CD8-positive, alpha-beta T cell (primary cell): ENCODE measurements at regions of chr15 and their contacts with region 1.

Region 1: DNA sequence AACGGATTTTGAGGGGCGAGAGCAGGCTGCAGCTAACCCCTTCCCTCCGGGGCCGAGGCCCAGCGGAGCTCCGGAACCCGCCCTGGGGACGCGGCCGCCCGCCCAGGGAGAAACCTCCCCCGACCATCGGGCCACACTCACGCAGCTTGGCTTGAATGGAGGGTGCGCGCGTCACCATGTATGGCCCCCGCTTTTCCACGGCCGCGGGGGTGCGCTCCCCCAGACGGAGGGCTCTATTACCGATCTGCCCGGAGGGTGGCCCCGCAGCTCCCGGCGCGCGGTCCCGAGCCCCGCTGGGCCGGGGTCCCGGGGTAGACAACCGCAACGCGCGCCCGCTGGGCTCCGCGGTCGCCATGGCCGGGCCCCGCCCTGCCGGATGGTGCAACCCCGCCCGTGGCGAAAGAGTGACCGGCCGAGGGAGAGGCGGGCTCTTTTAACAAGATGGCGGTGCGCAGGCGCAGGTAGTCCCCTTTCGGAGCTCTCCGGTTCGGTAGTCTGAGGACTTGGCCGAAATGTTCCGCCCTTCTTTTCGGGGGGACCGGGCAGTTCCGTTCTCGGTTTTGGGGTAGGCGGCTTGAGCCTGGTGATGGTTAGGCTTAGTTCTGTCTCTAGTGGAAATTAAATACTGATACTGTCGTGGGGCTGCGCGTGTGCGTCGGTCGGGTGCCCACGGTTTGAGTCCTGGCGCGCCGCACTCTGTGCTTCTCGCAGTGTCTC is at the start of gene FAM219B:
- DNase-seq: peak; percentile 30 to 84 (median 71)
- ATAC-seq: peak; percentile 79
- H3K4me3 ChIP-seq: peak within 1 kb of the TSS; percentile 85 to 89
- H3K4me3 Mint-ChIP-seq: peak within 1 kb of the TSS; percentile 94
- H3K27ac ChIP-seq: peak within 1 kb of the TSS; percentile 78 to 82
- H3K27ac Mint-ChIP-seq: peak within 1 kb of the TSS; percentile 95
- H3K4me1 ChIP-seq: peaks cover 28% of the 10 kb centered on the region
- H3K4me1 Mint-ChIP-seq: peaks cover 41% of the 10 kb centered on the region
- H3K27me3 ChIP-seq: no peaks in the 10 kb centered on the region
- H3K27me3 Mint-ChIP-seq: no peaks in the 10 kb centered on the region
- CTCF ChIP-seq: no peak
- total RNA-seq, gene FAM219B: 18.6 to 22.1 TPM

Region 2: DNA sequence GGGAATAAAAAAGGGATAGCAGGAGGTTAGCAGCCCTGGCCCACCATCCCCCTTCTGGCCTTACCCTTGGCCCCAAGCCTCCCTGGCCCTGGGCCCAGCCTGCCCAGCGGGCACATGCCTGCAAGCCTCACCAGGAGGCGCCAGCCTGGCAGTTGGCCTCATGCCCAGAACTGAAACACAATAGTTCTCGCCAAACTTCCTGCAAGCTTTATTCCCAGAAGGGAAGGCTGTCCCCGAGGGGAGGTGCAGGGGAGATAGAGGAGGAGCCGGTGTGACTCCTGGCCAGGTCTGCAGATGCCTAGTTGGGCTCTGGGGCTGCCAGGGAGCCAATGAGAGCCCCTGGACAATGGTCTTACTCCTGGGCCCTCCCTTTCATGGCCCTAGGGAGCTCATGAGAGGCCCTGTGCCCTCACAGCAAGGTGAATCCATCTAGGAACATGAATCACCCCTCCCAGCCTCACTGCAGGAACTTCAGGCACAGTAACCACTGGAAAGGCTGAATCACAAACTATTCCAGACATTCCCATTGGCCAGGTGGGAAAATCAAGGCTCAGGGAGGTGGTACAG is 666.5 kb before region 1 on chr15:
- CTCF ChIA-PET with region 1: no interaction called
- POLR2A ChIA-PET with region 1: no interaction called
- intact Hi-C with region 1: no loop called
- DNase-seq: no peak
- ATAC-seq: no peak
- H3K4me3 ChIP-seq: no peak overlapping the region
- H3K4me3 Mint-ChIP-seq: no peak overlapping the region
- H3K27ac ChIP-seq: no peak overlapping the region
- H3K27ac Mint-ChIP-seq: no peak overlapping the region
- H3K4me1 ChIP-seq: peaks cover 5% of the 10 kb centered on the region
- H3K4me1 Mint-ChIP-seq: peaks cover 7% of the 10 kb centered on the region
- H3K27me3 ChIP-seq: no peaks in the 10 kb centered on the region
- H3K27me3 Mint-ChIP-seq: peaks cover 31% of the 10 kb centered on the region
- CTCF ChIP-seq: no peak

Region 3: GRCh38 chr15:74799856-74800547 is 106.6 kb before region 1 on chr15:
- CTCF ChIA-PET with region 1: interaction called, 18 read pairs
- POLR2A ChIA-PET with region 1: no interaction called
- intact Hi-C with region 1: no loop called
- DNase-seq: peak; percentile 74 to 94 (median 87)
- ATAC-seq: peak; percentile 95
- H3K4me3 ChIP-seq: no peak overlapping the region
- H3K4me3 Mint-ChIP-seq: peak overlapping the region; percentile 42
- H3K27ac ChIP-seq: peak overlapping the region; percentile 36 to 94
- H3K27ac Mint-ChIP-seq: peak overlapping the region; percentile 92
- H3K4me1 ChIP-seq: peaks cover 56% of the 10 kb centered on the region
- H3K4me1 Mint-ChIP-seq: peaks cover 56% of the 10 kb centered on the region
- H3K27me3 ChIP-seq: no peaks in the 10 kb centered on the region
- H3K27me3 Mint-ChIP-seq: no peaks in the 10 kb centered on the region
- CTCF ChIP-seq: peak; percentile 92

Region 4: DNA sequence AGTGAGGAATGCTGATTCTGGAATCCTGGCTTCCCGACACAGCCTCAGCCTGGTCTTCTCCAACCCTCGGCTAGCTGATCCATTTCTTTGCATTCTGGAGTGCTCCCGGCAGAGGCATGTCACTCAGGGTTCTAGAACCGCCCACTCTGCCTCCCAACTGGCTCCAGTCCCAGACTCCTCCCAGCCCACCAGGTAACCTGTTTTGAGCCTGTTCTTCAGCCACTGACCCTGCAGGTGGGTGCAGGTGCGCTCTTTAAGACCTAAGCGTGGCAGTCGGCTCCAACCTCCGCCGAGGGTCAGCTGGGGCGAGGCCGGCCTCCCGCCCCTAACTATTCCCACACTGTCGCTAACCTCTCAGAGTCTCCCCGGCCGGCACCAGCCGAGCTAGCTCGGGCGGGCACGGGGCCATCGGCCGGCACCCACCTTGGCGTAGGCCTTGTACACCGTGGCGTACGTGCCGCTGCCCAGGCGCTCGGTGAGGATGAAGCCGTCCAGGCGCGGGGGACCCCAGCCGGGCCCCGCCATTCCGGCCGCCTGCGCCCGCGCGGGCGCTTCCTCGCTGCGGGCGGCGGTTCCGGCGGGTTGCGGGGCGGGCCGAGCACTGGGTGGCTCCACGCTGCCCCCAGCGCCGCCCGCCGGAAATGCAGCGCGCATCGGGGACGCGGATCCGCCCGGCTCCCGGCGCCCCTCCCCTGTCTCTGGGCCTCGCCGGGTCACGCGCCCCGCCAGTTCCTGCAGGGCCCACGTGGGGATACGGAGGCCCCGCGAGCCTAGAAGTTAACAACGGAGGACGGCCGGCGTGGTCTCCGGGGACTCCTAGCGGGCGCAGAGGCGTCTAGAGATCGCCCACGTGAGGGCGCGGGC is 63.8 kb before region 1 on chr15 and contains the start of gene ULK3:
- CTCF ChIA-PET with region 1: interaction called, 62 read pairs
- POLR2A ChIA-PET with region 1: interaction called, 12 read pairs
- intact Hi-C with region 1: loop called (anchors 1 kb)
- DNase-seq: peak; percentile 88 to 96 (median 92)
- ATAC-seq: peak; percentile 92
- H3K4me3 ChIP-seq: peak within 1 kb of the TSS; percentile 90 to 97
- H3K4me3 Mint-ChIP-seq: peak within 1 kb of the TSS; percentile 91
- H3K27ac ChIP-seq: peak within 1 kb of the TSS; percentile 72 to 78
- H3K27ac Mint-ChIP-seq: peak within 1 kb of the TSS; percentile 93
- H3K4me1 ChIP-seq: peaks cover 43% of the 10 kb centered on the region
- H3K4me1 Mint-ChIP-seq: peaks cover 48% of the 10 kb centered on the region
- H3K27me3 ChIP-seq: no peaks in the 10 kb centered on the region
- H3K27me3 Mint-ChIP-seq: no peaks in the 10 kb centered on the region
- CTCF ChIP-seq: peak; percentile 71
- total RNA-seq, gene ULK3: 34.3 to 35.1 TPM

Region 5: DNA sequence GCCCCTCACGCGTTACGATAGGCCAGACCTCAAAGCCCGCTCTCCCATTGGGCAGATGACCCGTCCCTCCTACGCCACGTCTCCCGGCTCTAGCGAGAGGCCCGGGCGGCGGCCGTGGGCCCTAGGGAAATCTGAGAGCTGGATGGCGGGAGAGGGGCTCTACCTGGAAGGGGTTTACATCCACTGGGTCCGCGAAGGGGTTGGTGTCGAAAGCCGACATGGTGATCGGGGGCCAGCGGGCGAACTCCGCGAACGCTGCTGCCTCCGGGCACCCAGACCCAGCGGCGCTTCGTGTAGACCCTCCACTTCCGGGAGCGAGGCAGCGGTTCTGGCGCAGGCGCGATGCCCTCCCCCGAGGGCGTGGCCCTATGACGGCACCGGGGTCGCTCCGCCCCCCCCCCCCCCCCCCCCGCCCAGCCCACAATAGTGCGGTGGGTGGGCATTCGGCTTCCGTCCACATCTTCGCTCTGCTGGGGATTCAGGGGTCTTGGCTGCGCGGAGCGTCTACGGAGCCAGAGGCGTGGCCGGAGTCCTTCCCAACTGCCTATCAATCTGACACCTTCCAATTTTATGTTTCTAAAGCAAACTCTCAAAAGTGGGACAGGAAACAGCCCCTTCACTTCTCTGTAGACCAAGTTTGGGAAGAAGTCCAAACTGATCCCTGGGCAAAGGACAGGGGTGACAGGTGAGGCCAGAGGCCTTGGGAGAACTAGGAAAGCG is 33.4 kb before region 1 on chr15 and contains the start of gene SCAMP2:
- CTCF ChIA-PET with region 1: interaction called, 22 read pairs
- POLR2A ChIA-PET with region 1: interaction called, 7 read pairs
- intact Hi-C with region 1: loop called (anchors 5 kb)
- DNase-seq: peak; percentile 82 to 96 (median 90)
- ATAC-seq: peak; percentile 93
- H3K4me3 ChIP-seq: peak within 1 kb of the TSS; percentile 84 to 96
- H3K4me3 Mint-ChIP-seq: peak within 1 kb of the TSS; percentile 98
- H3K27ac ChIP-seq: peak within 1 kb of the TSS; percentile 87 to 95
- H3K27ac Mint-ChIP-seq: peak within 1 kb of the TSS; percentile 95
- H3K4me1 ChIP-seq: peaks cover 43% of the 10 kb centered on the region
- H3K4me1 Mint-ChIP-seq: peaks cover 45% of the 10 kb centered on the region
- H3K27me3 ChIP-seq: no peaks in the 10 kb centered on the region
- H3K27me3 Mint-ChIP-seq: no peaks in the 10 kb centered on the region
- CTCF ChIP-seq: no peak
- total RNA-seq, gene SCAMP2: 48.7 to 57.2 TPM

Region 6: GRCh38 chr15:74889883-74890664 is 16.5 kb before region 1 on chr15 and contains the start of gene MPI:
- CTCF ChIA-PET with region 1: interaction called, 28 read pairs
- POLR2A ChIA-PET with region 1: interaction called, 12 read pairs
- intact Hi-C with region 1: loop called (anchors 1 to 2 kb)
- DNase-seq: peak; percentile 66 to 89 (median 83)
- ATAC-seq: peak; percentile 95
- H3K4me3 ChIP-seq: peak within 1 kb of the TSS; percentile 80 to 82
- H3K4me3 Mint-ChIP-seq: peak within 1 kb of the TSS; percentile 92
- H3K27ac ChIP-seq: peak within 1 kb of the TSS; percentile 79
- H3K27ac Mint-ChIP-seq: peak within 1 kb of the TSS; percentile 88
- H3K4me1 ChIP-seq: peaks cover 39% of the 10 kb centered on the region
- H3K4me1 Mint-ChIP-seq: peaks cover 46% of the 10 kb centered on the region
- H3K27me3 ChIP-seq: no peaks in the 10 kb centered on the region
- H3K27me3 Mint-ChIP-seq: no peaks in the 10 kb centered on the region
- CTCF ChIP-seq: no peak
- total RNA-seq, gene MPI: 18.3 to 19.9 TPM

Region 7: DNA sequence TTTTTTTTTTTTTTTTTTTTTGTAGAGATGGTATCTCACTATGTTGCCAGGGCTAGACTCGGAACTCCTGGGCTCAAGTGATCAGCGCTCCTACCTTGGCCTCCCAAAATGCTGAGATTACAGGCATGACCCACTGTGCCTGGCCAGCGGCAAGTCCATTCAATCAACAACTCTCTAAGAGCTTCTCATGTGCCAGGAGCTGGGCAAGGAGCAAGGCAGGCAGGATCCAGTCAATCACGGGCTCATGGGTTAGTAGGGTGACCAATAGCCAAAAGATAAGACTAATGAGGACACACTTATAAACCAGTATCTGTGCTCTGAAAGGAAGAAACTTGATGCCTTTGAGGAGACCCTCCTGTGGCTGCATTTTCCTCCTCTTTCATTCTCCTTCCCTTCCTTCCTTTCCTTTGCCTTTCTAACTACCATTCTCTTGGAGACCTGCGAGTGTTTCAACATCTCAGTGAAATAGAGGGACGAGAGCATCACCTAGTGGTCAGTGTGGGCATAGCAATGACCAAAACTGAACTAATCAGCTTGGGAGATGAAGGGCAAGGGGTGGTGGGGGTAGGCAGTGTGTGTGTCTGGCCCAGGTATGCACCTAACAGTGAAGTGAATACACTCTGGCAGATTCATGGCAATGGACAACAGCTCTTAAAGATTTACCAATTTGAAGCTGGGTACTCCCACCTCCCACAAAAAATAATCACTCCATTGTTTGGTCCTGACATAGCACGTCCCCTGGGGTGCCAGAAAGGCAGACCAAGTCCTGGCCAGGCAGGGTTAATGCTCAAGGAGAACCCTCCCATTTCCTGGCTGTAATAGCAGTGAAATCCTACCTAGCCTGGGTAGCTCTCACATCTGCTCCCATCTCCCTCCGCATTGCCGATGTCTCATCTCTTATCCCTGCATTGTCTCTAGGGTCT is 43.7 kb after region 1 on chr15:
- CTCF ChIA-PET with region 1: interaction called, 19 read pairs
- POLR2A ChIA-PET with region 1: no interaction called
- intact Hi-C with region 1: loop called in 1 of 2 experiments (anchors 1 kb)
- DNase-seq: peak; percentile 65 to 84 (median 79)
- ATAC-seq: peak; percentile 99
- H3K4me3 ChIP-seq: no peak overlapping the region
- H3K4me3 Mint-ChIP-seq: no peak overlapping the region
- H3K27ac ChIP-seq: no peak overlapping the region
- H3K27ac Mint-ChIP-seq: no peak overlapping the region
- H3K4me1 ChIP-seq: no peaks in the 10 kb centered on the region
- H3K4me1 Mint-ChIP-seq: peaks cover 6% of the 10 kb centered on the region
- H3K27me3 ChIP-seq: peaks cover 0 to 2% of the 10 kb centered on the region in 2 experiments
- H3K27me3 Mint-ChIP-seq: no peaks in the 10 kb centered on the region
- CTCF ChIP-seq: peak; percentile 94